ENCODE measurements at regions of chr13 and their contacts with region 1.

Region 1: GRCh38 chr13:62119739-62120700 is 704.4 kb upstream of the PCDH20 start:
- DNase-seq: no peak
- ATAC-seq: no peak
- H3K4me3 ChIP-seq: no peak overlapping the region
- H3K27ac ChIP-seq: no peak overlapping the region
- H3K4me1 ChIP-seq: no peaks in the 10 kb centered on the region
- H3K27me3 ChIP-seq: no peaks in the 10 kb centered on the region
- CTCF ChIP-seq: peak; percentile 24
- EP300 ChIP-seq: no peak
- POLR2A ChIP-seq: no peak
- RAD21 ChIP-seq: no peak

Region 2: GRCh38 chr13:62246581-62246980 is 126.6 kb after region 1 on chr13:
- CTCF ChIA-PET with region 1: no interaction called
- POLR2A ChIA-PET with region 1: no interaction called
- in situ Hi-C with region 1: no loop called
- intact Hi-C with region 1: no loop called
- DNase-seq: no peak
- ATAC-seq: no peak
- H3K4me3 ChIP-seq: no peak overlapping the region
- H3K27ac ChIP-seq: no peak overlapping the region
- H3K4me1 ChIP-seq: no peaks in the 10 kb centered on the region
- H3K27me3 ChIP-seq: no peaks in the 10 kb centered on the region
- CTCF ChIP-seq: no peak
- EP300 ChIP-seq: no peak
- POLR2A ChIP-seq: no peak
- RAD21 ChIP-seq: no peak

Region 3: GRCh38 chr13:62544928-62545327 is 424.9 kb after region 1 on chr13:
- CTCF ChIA-PET with region 1: no interaction called
- POLR2A ChIA-PET with region 1: no interaction called
- in situ Hi-C with region 1: no loop called
- intact Hi-C with region 1: loop called (anchors 10 kb)
- DNase-seq: no peak
- ATAC-seq: no peak
- H3K4me3 ChIP-seq: no peak overlapping the region
- H3K27ac ChIP-seq: no peak overlapping the region
- H3K4me1 ChIP-seq: no peaks in the 10 kb centered on the region
- H3K27me3 ChIP-seq: no peaks in the 10 kb centered on the region
- CTCF ChIP-seq: no peak
- EP300 ChIP-seq: no peak
- POLR2A ChIP-seq: no peak
- RAD21 ChIP-seq: no peak